ENCODE measurements at regions of chr18 and their contacts with region 1.

Region 1: DNA sequence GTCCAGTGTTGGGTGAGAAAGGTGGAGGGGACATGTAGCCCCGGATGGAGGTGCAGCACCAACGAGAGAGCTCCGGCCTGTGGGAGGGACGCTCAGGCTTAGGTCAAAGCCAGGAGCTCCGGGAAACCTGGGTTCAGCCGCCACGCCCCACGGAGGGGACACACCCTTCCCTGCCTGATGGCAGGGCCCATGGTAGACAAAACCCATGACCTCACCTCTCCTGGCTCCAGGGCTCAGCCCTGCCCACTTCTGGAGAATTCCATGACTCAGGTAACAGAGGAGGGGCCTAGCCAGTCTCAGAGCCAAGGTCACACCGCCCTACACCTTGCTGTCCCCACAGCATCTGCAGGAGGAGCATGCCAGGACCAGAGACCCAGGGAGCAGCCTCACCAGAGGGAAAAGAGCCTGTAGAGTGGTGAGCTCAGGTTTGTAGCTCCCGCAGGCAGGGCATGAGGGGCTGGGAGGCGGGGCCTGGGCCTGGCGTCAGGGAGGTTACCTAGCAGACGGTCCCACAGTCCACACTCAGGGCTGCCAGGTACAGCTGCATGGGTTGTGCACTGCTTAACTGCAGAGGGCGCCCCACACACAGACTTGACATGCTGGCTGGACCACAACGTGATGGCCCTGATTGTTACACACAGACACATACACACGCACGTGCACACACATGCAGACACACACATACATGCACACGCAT is 70.8 kb upstream of the SMAD7 start:
- DNase-seq: peak; percentile 34 to 35
- ATAC-seq: peak in 3 of 8 donors; percentile 29 to 35 (median 31)
- H3K4me3 ChIP-seq: no peak overlapping the region
- H3K27ac ChIP-seq: no peak overlapping the region
- H3K4me1 ChIP-seq: peaks cover 0 to 9% (median 0%) of the 10 kb centered on the region in 9 donors
- H3K27me3 ChIP-seq: no peaks in the 10 kb centered on the region
- CTCF ChIP-seq: peak in 7 of 9 donors; percentile 16 to 48 (median 39)

Region 2: DNA sequence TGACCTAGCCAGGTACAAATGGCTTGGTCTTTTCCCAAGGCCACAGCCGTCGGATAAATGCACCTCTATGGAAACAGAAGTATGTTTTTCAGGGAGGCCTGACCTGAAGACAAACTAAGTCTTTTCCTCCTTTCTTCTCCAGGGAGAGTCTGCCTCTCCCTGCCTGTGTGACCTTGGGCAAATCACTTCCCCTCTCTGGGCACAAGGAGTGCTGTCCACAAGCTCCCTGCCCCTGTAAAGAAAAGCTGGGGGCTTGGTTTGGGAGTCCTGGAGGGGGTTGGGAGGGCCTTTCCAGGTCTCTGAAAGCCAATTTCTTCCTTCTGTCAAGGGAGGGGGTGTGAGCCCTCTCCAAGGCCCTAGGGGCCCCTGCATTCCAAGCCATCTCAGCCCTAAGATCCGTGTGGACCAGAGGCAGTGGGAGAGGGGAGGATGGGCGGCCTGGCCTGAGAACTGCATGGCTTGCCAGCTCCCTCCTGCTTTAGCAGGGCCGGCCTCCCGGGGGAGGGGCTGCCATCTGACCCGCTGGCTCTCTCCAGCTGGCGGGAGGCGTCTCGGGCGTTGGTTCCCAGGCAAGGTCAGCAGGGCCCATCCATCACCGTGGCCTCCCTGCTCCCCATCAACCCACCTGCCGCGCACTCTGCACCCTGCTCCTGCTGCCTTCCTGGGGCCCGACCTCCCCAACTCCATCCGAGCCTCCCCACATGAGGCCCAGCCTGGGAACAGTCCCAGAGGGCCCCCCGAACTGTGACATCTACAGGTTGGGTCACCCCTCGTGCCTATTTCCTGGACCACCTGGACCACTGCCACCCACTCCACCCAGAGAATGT is 132.3 kb before region 1 on chr18:
- intact Hi-C with region 1: no loop called
- DNase-seq: peak; percentile 55 to 63
- ATAC-seq: peak; percentile 35 to 68 (median 50)
- H3K4me3 ChIP-seq: no peak overlapping the region
- H3K27ac ChIP-seq: no peak overlapping the region
- H3K4me1 ChIP-seq: peaks cover 10 to 44% (median 32%) of the 10 kb centered on the region in 9 donors
- H3K27me3 ChIP-seq: no peaks in the 10 kb centered on the region
- CTCF ChIP-seq: no peak

Region 3: GRCh38 chr18:48975649-48976204 is 45.9 kb before region 1 on chr18:
- intact Hi-C with region 1: loop called in 1 of 10 experiments (anchors 2 kb)
- DNase-seq: peak; percentile 48 to 57
- ATAC-seq: peak; percentile 58 to 86 (median 75)
- H3K4me3 ChIP-seq: peak overlapping the region; percentile 56 to 77 (median 68)
- H3K27ac ChIP-seq: peak overlapping the region; percentile 69 to 93 (median 86)
- H3K4me1 ChIP-seq: peaks cover 0 to 20% (median 9%) of the 10 kb centered on the region in 9 donors
- H3K27me3 ChIP-seq: peaks cover 0 to 34% (median 0%) of the 10 kb centered on the region in 7 donors
- CTCF ChIP-seq: no peak

Region 4: GRCh38 chr18:49169037-49169521 is 147.5 kb after region 1 on chr18:
- intact Hi-C with region 1: no loop called
- DNase-seq: no peak
- ATAC-seq: no peak
- H3K4me3 ChIP-seq: no peak overlapping the region
- H3K27ac ChIP-seq: no peak overlapping the region
- H3K4me1 ChIP-seq: peaks cover 0 to 28% (median 9%) of the 10 kb centered on the region in 9 donors
- H3K27me3 ChIP-seq: no peaks in the 10 kb centered on the region
- CTCF ChIP-seq: no peak

Measured in heart right ventricle (tissue), 16 donors.